ENCODE measurements at regions of chr2 and their contacts with region 1.

Region 1: GRCh38 chr2:182666674-182667314 is 49.3 kb upstream of the DNAJC10 start:
- DNase-seq: peak; percentile 7
- H3K4me3 ChIP-seq: no peak overlapping the region
- H3K27ac ChIP-seq: no peak overlapping the region
- H3K4me1 ChIP-seq: no peaks in the 10 kb centered on the region
- H3K27me3 ChIP-seq: no peaks in the 10 kb centered on the region
- CTCF ChIP-seq: peak; percentile 5 to 57 (median 39)

Region 2: GRCh38 chr2:182186132-182186735 is 480.6 kb before region 1 on chr2:
- dilution Hi-C with region 1: loop called (anchors 25 kb)
- DNase-seq: no peak
- H3K4me3 ChIP-seq: no peak overlapping the region
- H3K27ac ChIP-seq: no peak overlapping the region
- H3K4me1 ChIP-seq: no peaks in the 10 kb centered on the region
- H3K27me3 ChIP-seq: peaks cover 2% of the 10 kb centered on the region
- CTCF ChIP-seq: peak in 2 of 3 experiments; percentile 40 to 57

Region 3: DNA sequence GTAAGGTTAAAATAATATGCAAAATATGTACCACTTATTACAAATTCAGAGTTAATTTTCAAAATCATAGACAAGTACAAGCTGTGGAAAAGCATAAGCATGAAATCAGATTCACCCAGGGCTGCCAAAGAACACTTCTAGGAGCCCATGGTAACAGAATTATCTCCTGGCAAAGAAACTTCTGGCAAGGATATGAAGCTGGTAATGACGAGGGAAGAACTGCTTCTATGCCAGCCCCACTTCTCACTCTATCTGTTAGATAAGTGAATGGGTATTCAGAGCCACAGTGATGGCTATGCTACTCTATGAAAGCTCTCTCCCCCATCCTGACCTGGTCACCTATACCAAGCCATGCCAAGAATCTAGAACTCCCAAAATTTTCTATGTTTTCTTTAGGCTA is 203.0 kb before region 1 on chr2:
- dilution Hi-C with region 1: no loop called
- DNase-seq: no peak
- H3K4me3 ChIP-seq: no peak overlapping the region
- H3K27ac ChIP-seq: no peak overlapping the region
- H3K4me1 ChIP-seq: no peaks in the 10 kb centered on the region
- H3K27me3 ChIP-seq: no peaks in the 10 kb centered on the region
- CTCF ChIP-seq: no peak

Region 4: GRCh38 chr2:182593394-182593975 is 73.3 kb before region 1 on chr2:
- dilution Hi-C with region 1: no loop called
- DNase-seq: no peak
- H3K4me3 ChIP-seq: no peak overlapping the region
- H3K27ac ChIP-seq: no peak overlapping the region
- H3K4me1 ChIP-seq: peaks cover 18% of the 10 kb centered on the region
- H3K27me3 ChIP-seq: no peaks in the 10 kb centered on the region
- CTCF ChIP-seq: no peak

Region 5: GRCh38 chr2:182606728-182607681 is 59.8 kb before region 1 on chr2:
- dilution Hi-C with region 1: no loop called
- DNase-seq: no peak
- H3K4me3 ChIP-seq: no peak overlapping the region
- H3K27ac ChIP-seq: no peak overlapping the region
- H3K4me1 ChIP-seq: no peaks in the 10 kb centered on the region
- H3K27me3 ChIP-seq: no peaks in the 10 kb centered on the region
- CTCF ChIP-seq: no peak

Measured in keratinocyte (primary cell).